ENCODE measurements at regions of chr22 and their contacts with region 1.

Region 1: GRCh38 chr22:32926600-32926999 is 125.1 kb downstream of the TIMP3 start:
- DNase-seq: peak; percentile 34 to 41
- H3K4me3 ChIP-seq: no peak overlapping the region
- H3K4me3 Mint-ChIP-seq: no peak overlapping the region
- H3K27ac Mint-ChIP-seq: no peak overlapping the region
- H3K4me1 ChIP-seq: no peaks in the 10 kb centered on the region
- H3K4me1 Mint-ChIP-seq: no peaks in the 10 kb centered on the region
- H3K27me3 ChIP-seq: no peaks in the 10 kb centered on the region; the same call in 1 of the 2 replicates
- H3K27me3 Mint-ChIP-seq: peaks cover 2% of the 10 kb centered on the region
- CTCF ChIP-seq: peak; percentile 54 to 68

Region 2: GRCh38 chr22:32904044-32904443 is 22.6 kb before region 1 on chr22:
- CTCF ChIA-PET with region 1: no interaction called
- POLR2A ChIA-PET with region 1: no interaction called
- intact Hi-C with region 1: no loop called
- DNase-seq: peak; percentile 61 to 63
- H3K4me3 ChIP-seq: no peak overlapping the region
- H3K4me3 Mint-ChIP-seq: no peak overlapping the region
- H3K27ac Mint-ChIP-seq: no peak overlapping the region
- H3K4me1 ChIP-seq: no peaks in the 10 kb centered on the region
- H3K4me1 Mint-ChIP-seq: no peaks in the 10 kb centered on the region
- H3K27me3 ChIP-seq: no peaks in the 10 kb centered on the region
- H3K27me3 Mint-ChIP-seq: no peaks in the 10 kb centered on the region
- CTCF ChIP-seq: no peak

Region 3: DNA sequence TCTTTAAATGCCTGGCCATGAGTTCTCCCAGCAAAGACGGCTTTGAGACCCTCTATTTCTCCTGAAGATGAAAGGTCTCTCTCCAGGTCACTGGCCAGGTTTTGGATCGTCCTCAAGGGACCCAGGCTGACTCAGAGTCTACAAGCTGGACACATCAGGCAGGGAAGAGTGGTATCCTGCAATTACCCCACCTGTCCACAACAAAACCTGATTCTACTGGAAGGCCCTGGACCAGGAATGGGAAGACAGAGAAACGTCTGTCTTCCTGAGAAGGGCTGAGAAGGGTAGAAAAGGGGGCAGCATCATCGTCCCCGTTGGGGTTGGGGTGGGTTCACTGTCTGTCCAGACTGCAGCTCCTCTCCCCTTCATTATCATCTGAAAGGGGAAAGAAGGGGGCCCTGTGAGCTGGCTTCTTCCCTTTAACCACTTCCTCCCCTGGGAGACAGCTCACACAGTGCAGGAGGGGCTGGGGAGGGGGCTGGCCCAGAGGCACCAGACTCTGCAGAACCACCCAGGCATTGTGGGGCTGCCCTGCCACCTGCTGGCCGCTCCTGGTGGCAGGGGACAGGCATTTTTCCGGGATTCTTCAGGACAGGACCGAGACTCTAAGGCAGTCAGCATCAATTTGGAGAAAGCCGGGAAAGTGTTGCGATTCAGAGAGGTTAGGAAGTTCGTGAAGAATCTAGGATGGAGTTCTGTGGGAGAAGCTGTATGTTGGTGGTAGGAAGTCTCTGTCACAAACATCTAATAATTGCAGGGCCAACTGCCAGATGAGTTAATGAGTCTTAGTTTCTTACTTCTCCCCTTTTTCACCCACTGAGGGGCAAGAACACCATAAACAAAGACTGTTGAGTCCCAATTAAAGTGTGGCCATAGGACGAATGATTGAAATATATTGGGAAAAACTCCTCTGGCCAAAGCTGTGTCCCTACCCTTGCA is 74.0 kb after region 1 on chr22:
- CTCF ChIA-PET with region 1: no interaction called
- POLR2A ChIA-PET with region 1: no interaction called
- intact Hi-C with region 1: loop called (anchors 5 kb)
- DNase-seq: peak; percentile 50 to 73
- H3K4me3 ChIP-seq: no peak overlapping the region
- H3K4me3 Mint-ChIP-seq: no peak overlapping the region
- H3K27ac Mint-ChIP-seq: no peak overlapping the region
- H3K4me1 ChIP-seq: no peaks in the 10 kb centered on the region
- H3K4me1 Mint-ChIP-seq: no peaks in the 10 kb centered on the region
- H3K27me3 ChIP-seq: no peaks in the 10 kb centered on the region
- H3K27me3 Mint-ChIP-seq: peaks cover 5% of the 10 kb centered on the region
- CTCF ChIP-seq: peak; percentile 89 to 92